Activated B cell treated with CpG ODN at 0.5 μM for 24 hours (primary cell): ENCODE measurements at regions of chr6 and their contacts with region 1.

Region 1: DNA sequence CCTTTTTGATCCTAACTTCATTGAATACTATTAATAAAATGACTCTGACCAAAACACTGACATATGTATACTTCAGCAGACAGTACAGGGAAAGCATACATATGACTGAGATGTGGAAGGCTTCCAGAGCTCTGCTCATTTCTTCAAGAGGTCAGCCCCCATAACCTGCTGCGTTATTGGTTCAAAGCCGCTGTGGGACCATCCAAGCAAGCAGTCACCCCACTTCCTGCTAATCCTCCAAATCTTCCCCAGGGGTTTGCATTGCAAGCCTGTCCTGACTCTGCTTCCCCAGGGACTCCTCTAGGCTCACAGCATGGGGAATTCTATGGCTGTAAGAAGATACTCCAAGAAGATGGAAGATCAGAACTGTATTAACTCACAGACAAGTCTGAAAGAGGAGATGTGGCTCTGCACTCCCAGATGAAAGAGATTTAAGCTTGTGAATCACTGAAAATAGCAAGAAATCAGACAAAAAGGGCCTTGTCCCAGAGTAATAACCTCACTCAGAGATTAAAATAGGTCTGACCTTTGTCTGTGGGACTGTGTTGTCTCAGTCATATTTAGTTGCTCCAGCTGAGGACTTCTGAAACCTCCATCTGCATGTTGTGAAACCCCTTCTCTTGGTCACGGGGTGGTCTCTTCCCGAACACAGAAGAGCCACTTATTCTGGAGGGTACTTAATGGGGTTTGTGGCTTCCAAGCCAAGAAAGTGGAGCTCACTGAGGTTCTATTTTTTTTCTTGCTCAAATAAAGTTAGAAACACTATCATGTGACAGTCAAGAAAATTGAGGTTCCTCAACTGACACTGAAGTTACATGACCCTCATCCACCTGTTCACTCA is 101.5 kb upstream of the MARCKS start:
- DNase-seq: peak; percentile 25
- ATAC-seq: peak; percentile 86
- H3K4me3 Mint-ChIP-seq: peak overlapping the region; percentile 60
- H3K27ac Mint-ChIP-seq: peak overlapping the region; percentile 82
- H3K4me1 Mint-ChIP-seq: peaks cover 46% of the 10 kb centered on the region
- H3K27me3 Mint-ChIP-seq: no peaks in the 10 kb centered on the region
- CTCF ChIP-seq: no peak

Region 2: DNA sequence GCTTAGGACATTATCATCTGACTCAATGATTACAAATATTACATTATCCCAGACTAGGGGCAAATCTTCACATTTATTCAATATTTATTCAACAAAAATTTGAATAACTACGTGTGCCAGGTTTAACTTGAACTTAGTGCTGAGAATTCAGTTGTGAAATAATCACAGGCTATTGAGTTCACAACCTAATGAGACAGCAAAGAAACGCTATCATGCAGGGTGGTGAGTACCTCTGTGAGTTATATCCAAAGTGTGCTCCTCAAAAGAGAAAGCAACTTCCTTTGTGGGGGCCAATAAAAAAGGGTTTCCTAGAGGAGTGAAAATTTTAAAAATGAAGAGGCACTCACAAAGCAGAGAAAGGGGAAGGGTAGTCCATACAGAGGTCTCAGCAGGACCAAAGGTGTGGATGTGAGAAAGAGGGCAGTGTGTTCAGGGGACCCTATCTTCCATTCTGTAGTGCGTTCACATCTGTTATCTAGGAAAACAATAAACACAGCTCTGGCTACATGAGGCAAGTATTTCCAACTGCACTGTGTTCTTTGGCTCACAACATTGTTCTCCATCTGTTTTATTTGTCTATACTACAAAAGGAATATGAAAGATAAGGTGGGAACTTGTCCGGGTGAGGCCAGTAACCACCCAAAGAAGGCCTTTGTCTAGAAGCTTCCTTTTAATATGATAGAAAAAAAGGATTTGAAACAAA is 54.0 kb before region 1 on chr6:
- CTCF ChIA-PET with region 1: no interaction called
- POLR2A ChIA-PET with region 1: no interaction called
- intact Hi-C with region 1: loop called (anchors 5 kb)
- DNase-seq: no peak
- ATAC-seq: no peak
- H3K4me3 Mint-ChIP-seq: no peak overlapping the region
- H3K27ac Mint-ChIP-seq: no peak overlapping the region
- H3K4me1 Mint-ChIP-seq: peaks cover 10% of the 10 kb centered on the region
- H3K27me3 Mint-ChIP-seq: no peaks in the 10 kb centered on the region
- CTCF ChIP-seq: no peak